ENCODE measurements at regions of chr5 and their contacts with region 1.

Region 1: DNA sequence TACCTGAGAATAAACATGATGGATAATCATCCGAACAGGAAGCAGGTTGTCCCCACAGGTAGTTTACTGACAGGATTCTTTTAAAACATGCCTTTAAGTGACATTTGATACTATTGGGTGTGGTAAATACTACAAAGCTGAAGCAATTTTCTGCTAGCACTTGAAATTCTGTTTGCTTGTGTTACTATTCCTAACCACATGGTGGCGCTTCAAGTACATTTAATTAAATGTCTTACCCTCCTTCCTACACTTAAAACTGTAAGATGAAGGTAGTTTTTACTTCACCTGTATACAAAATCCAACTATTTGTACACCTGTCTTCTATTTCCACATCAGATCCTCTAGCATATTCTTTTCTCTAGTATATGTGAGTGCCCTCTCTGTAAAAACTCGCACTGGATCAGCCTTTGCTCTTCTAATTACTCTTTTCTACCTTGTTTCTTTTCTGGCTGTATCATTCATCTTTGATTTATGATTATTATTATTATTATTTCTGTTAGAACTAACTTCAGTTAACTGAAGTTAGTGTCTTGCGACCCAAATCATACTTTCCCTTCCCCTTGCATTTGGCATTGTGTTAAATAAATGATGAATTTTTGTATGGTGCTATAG is 18.4 kb downstream of the SLC25A46 start:
- DNase-seq: peak; percentile 40
- ATAC-seq: peak; percentile 55; the same call in 1 of the 2 replicates
- H3K4me3 ChIP-seq: no peak overlapping the region
- H3K27ac ChIP-seq: no peak overlapping the region
- H3K4me1 ChIP-seq: no peaks in the 10 kb centered on the region
- H3K27me3 ChIP-seq: no peaks in the 10 kb centered on the region
- CTCF ChIP-seq: peak; percentile 37 to 79 (median 58); a peak in 5 of 6 replicates
- POLR2A ChIP-seq: no peak
- RAD21 ChIP-seq: peak; percentile 72

Region 2: GRCh38 chr5:110865400-110866094 is 108.3 kb after region 1 on chr5:
- CTCF ChIA-PET with region 1: interaction called, 3 read pairs
- POLR2A ChIA-PET with region 1: no interaction called
- RAD21 ChIA-PET with region 1: no interaction called
- intact Hi-C with region 1: loop called (anchors 1 kb)
- DNase-seq: peak; percentile 22
- ATAC-seq: peak; percentile 95
- H3K4me3 ChIP-seq: no peak overlapping the region
- H3K27ac ChIP-seq: no peak overlapping the region
- H3K4me1 ChIP-seq: no peaks in the 10 kb centered on the region
- H3K27me3 ChIP-seq: no peaks in the 10 kb centered on the region
- CTCF ChIP-seq: peak; percentile 27 to 88 (median 76); a peak in 5 of 6 replicates
- POLR2A ChIP-seq: no peak
- RAD21 ChIP-seq: peak; percentile 50; the same call in 1 of the 2 replicates

Region 3: GRCh38 chr5:111063700-111064322 is 306.6 kb after region 1 on chr5:
- CTCF ChIA-PET with region 1: interaction called, 3 read pairs
- POLR2A ChIA-PET with region 1: no interaction called
- RAD21 ChIA-PET with region 1: no interaction called
- intact Hi-C with region 1: loop called (anchors 1 kb)
- DNase-seq: peak; percentile 31
- ATAC-seq: peak; percentile 94
- H3K4me3 ChIP-seq: no peak overlapping the region
- H3K27ac ChIP-seq: no peak overlapping the region
- H3K4me1 ChIP-seq: no peaks in the 10 kb centered on the region
- H3K27me3 ChIP-seq: peaks cover 21% of the 10 kb centered on the region
- CTCF ChIP-seq: peak; percentile 32 to 74 (median 70); a peak in 5 of 6 replicates
- POLR2A ChIP-seq: no peak
- RAD21 ChIP-seq: peak; percentile 59

Region 4: GRCh38 chr5:111278845-111279504 is 521.8 kb after region 1 on chr5:
- CTCF ChIA-PET with region 1: no interaction called
- POLR2A ChIA-PET with region 1: no interaction called
- RAD21 ChIA-PET with region 1: no interaction called
- intact Hi-C with region 1: loop called (anchors 2 kb)
- DNase-seq: peak; percentile 42
- ATAC-seq: peak; percentile 100
- H3K4me3 ChIP-seq: no peak overlapping the region
- H3K27ac ChIP-seq: no peak overlapping the region
- H3K4me1 ChIP-seq: no peaks in the 10 kb centered on the region
- H3K27me3 ChIP-seq: no peaks in the 10 kb centered on the region
- CTCF ChIP-seq: peak; percentile 76 to 95 (median 89)
- POLR2A ChIP-seq: no peak
- RAD21 ChIP-seq: peak; percentile 85

Measured in HCT116 (cell line).